ENCODE measurements at regions of chr16 and their contacts with region 1.

Region 1: GRCh38 chr16:29975811-29976511 is 2.3 kb downstream of the TAOK2 start:
- DNase-seq: peak; percentile 10 to 34
- H3K4me3 ChIP-seq: peak overlapping the region in 1 of 3 donors; percentile 6
- H3K27ac ChIP-seq: peak overlapping the region in 1 of 3 donors; percentile 14
- H3K4me1 ChIP-seq: peaks cover 15 to 33% of the 10 kb centered on the region in 2 donors
- H3K27me3 ChIP-seq: no peaks in the 10 kb centered on the region
- CTCF ChIP-seq: no peak
- POLR2A ChIP-seq: no peak

Region 2: GRCh38 chr16:29995911-29996772 is 20.2 kb after region 1 on chr16 and contains the start of gene INO80E:
- intact Hi-C with region 1: loop called (anchors 2 kb)
- DNase-seq: peak; percentile 98 to 99
- H3K4me3 ChIP-seq: peak within 1 kb of the TSS; percentile 24 to 81 (median 66)
- H3K27ac ChIP-seq: peak within 1 kb of the TSS; percentile 85 to 96 (median 89)
- H3K4me1 ChIP-seq: peaks cover 13 to 15% of the 10 kb centered on the region in 2 donors
- H3K27me3 ChIP-seq: no peaks in the 10 kb centered on the region
- CTCF ChIP-seq: peak in 1 of 6 experiments; percentile 15
- POLR2A ChIP-seq: peak in 1 of 2 donors; percentile 61
- total RNA-seq, gene INO80E: 45.9 to 165 (median 142) TPM

Measured in thyroid gland (tissue), 4 donors.